Mammary epithelial cell (primary cell): ENCODE measurements at regions of chr6 and their contacts with region 1.

Region 1: DNA sequence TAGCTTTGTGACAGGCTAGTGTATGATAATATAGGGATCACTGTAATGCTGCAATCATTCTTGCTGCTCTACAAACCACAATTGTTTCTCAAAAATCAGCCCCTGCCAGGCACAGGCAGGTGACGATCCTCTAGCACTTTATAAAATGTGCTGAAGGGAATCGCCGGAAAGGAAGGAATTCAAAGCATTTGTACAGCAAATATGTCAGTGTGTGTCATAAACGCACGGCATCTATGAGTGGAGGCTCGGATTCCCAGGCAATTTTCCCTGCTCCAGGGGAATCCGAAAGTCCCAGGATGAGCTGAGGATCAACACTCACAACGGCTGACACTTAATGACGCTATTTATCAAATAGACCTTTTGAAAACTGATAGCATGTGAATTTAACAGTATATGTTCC is 1.4 kb downstream of the PHACTR1 start:
- DNase-seq: peak; percentile 12
- H3K4me3 ChIP-seq: no peak overlapping the region
- H3K27ac ChIP-seq: no peak overlapping the region
- H3K4me1 ChIP-seq: no peaks in the 10 kb centered on the region
- H3K27me3 ChIP-seq: peaks cover 3% of the 10 kb centered on the region
- CTCF ChIP-seq: no peak

Region 2: DNA sequence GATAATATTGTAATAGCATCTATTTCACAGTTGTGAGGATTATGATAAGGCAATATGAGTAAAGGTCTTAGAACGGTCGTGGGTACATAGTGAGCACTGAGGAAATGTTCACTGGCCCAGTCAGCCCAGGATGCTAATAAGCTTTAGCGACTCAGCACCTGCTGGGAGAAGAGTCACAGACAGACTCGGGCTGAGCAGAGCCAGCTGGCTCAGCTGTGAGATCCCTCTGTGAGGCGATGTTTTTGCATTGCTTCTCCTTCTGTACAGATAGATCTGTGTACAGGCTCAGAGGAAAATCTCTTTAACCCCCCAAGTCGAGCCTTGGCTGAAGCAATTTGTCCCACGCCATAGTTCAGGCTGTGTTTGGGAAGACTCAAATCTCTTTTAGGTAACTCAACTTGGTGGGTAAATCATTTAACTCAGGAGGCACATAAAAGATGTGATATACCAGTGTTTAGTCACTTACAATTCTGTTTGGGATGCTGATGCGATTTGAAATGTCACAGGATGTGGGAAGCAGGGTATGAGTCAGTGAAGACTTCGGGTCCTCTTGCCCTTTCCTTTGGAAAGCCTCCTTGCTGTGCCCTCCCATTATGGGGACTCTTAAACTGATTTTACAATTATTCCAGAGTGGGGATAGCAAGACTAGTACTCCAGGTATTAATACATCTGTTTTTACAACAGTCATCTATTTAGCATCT is 51.7 kb after region 1 on chr6:
- CTCF ChIA-PET with region 1: no interaction called
- dilution Hi-C with region 1: loop called (anchors 5 kb)
- in situ Hi-C with region 1: no loop called
- intact Hi-C with region 1: no loop called
- DNase-seq: no peak
- H3K4me3 ChIP-seq: no peak overlapping the region
- H3K27ac ChIP-seq: no peak overlapping the region
- H3K4me1 ChIP-seq: no peaks in the 10 kb centered on the region
- H3K27me3 ChIP-seq: peaks cover 2% of the 10 kb centered on the region
- CTCF ChIP-seq: no peak